ENCODE measurements at regions of chr12 and their contacts with region 1.

Region 1: DNA sequence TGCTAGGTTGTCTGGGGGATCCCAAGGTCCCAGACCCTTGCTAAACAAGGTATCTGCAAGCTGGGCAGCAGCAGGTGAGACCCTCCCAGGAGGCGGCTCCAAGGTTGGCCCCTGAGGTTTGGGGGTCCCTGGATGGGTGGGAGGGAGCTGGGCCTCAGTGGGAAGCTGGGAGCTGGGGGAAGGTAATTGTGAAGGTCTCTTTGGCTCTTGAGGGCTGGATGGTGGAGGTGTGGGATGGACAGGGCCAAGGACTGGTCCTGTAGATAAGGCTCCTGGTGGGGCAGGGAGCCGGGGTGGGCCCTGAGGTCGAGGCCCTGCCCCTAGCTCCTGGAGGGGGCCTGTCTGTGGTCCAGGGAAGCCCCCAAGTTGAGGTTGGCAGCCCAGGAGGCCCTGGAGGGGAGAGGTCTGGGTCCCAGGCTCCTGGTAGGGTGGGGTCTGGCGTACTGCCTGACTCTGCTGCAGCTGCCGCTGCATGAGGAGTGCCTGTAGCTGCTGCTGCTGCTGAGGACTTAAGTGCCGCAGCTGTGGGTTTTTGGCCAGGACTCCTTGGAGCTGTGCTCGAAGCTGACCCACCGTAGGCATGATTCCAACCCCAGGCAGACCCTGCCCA is 13.1 kb upstream of the PRKAG1 start:
- DNase-seq: no peak
- ATAC-seq: no peak
- H3K4me3 Mint-ChIP-seq: no peak overlapping the region
- H3K27ac Mint-ChIP-seq: peak overlapping the region; percentile 46
- H3K4me1 Mint-ChIP-seq: no peaks in the 10 kb centered on the region
- H3K27me3 Mint-ChIP-seq: no peaks in the 10 kb centered on the region
- CTCF ChIP-seq: no peak

Region 2: GRCh38 chr12:49018261-49019119 is 13.2 kb before region 1 on chr12 and contains the start of gene PRKAG1:
- CTCF ChIA-PET with region 1: interaction called, 6 read pairs
- POLR2A ChIA-PET with region 1: interaction called, 16 read pairs
- intact Hi-C with region 1: no loop called
- DNase-seq: peak; percentile 96
- ATAC-seq: peak; percentile 90
- H3K4me3 Mint-ChIP-seq: peak within 1 kb of the TSS; percentile 95
- H3K27ac Mint-ChIP-seq: peak within 1 kb of the TSS; percentile 98
- H3K4me1 Mint-ChIP-seq: peaks cover 23% of the 10 kb centered on the region
- H3K27me3 Mint-ChIP-seq: no peaks in the 10 kb centered on the region
- CTCF ChIP-seq: peak; percentile 57
- total RNA-seq, gene PRKAG1: 43.3 to 47.3 TPM

Measured in activated CD8-positive, alpha-beta T cell treated with anti-CD3 and anti-CD28 coated beads for 36 hours (primary cell).